ENCODE measurements at regions of chr7 and their contacts with region 1.

Region 1: DNA sequence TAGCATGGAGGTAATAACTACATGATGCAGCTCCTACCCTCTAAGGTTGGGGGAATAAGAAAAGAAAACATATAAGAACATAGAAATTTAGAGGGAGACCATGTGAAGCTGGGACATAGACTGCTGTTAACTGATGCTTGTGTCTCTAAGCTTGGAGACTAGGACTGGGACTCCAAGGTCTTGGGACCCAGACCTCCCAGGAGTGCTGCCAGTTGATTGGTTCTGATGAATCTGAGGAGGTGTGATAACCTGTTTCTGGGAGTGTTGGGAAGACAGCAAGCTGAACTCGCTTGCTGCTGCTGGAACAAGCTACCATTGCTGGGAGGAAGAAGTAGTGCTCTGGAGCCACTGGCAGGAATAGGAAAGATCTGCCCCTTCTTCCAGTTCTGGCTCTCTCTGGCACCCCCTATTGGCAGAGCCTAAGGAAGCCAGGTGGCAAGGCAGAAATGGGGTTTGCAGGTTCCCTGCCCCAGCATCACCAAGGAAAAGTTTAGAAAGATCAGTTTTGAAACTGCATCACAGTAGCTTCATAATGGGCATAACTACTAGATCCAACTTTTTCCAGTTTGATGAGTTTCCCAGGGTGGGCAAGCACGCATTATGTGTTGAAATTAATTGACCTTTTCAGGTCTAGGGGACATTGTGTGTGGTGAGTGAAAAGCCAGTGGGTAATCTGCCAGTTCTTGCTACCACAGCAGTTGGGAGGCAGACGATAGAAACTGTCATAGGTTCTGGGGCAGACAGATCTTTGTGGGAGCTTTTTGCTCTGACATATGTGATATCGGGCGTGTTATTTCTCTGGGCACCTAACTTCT is 140.7 kb downstream of the SND1 start:
- DNase-seq: no peak
- ATAC-seq: peak; percentile 89
- H3K4me3 ChIP-seq: no peak overlapping the region
- H3K27ac ChIP-seq: no peak overlapping the region
- H3K4me1 ChIP-seq: peaks cover 5% of the 10 kb centered on the region; the same call in 1 of the 2 replicates
- H3K27me3 ChIP-seq: no peaks in the 10 kb centered on the region
- CTCF ChIP-seq: peak; percentile 49 to 89 (median 63)
- EP300 ChIP-seq: no peak
- POLR2A ChIP-seq: no peak
- RAD21 ChIP-seq: peak; percentile 38

Region 2: GRCh38 chr7:127536741-127537140 is 256.0 kb before region 1 on chr7:
- CTCF ChIA-PET with region 1: no interaction called
- POLR2A ChIA-PET with region 1: no interaction called
- RAD21 ChIA-PET with region 1: no interaction called
- SMC1A ChIA-PET with region 1: no interaction called
- in situ Hi-C with region 1: no loop called
- intact Hi-C with region 1: no loop called
- DNase-seq: no peak
- ATAC-seq: no peak
- H3K4me3 ChIP-seq: no peak overlapping the region
- H3K27ac ChIP-seq: no peak overlapping the region
- H3K4me1 ChIP-seq: no peaks in the 10 kb centered on the region
- H3K27me3 ChIP-seq: no peaks in the 10 kb centered on the region
- CTCF ChIP-seq: no peak
- EP300 ChIP-seq: no peak
- POLR2A ChIP-seq: no peak
- RAD21 ChIP-seq: no peak

Region 3: DNA sequence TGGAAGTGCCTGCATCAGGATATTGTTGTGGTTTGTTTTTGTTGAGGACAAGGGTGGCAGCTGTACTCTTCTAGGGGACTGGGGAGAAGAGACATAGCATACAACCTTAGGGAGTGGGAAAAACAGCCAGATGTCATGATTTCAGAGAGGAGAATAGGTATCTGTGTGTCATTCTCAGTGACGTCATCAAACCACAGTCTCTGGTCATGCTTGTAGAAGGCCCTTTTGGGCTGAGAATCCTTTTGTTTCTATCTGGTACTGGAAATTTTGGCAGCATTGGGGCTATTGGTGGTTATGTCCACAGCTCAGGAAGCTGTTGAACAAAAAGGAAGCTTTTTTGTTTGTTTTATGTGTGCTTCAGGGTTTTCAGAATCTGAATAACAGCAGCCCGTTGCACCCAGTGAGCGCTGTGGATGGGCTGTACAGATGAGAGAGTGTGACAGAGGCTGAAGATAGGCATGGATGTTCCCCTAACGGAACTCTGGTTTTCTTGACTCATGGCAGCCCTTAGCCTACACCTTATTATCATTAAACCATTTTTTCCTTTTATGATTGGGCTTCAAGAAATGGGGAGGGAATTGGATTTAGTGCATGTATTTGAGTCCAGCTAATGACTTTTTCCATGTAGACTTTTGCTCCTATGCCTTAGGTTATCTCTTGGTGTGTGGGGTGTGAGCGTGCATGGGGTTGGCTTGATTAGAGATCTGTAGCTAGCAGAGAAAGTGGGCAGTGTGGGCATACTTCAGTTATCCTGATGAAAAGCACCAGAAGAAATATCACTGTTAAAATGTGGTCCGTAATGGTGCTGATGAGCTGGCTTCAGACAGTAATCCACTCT is 75.0 kb before region 1 on chr7:
- CTCF ChIA-PET with region 1: interaction called, 13 read pairs
- POLR2A ChIA-PET with region 1: no interaction called
- RAD21 ChIA-PET with region 1: no interaction called
- SMC1A ChIA-PET with region 1: interaction called, 3 read pairs
- in situ Hi-C with region 1: no loop called
- intact Hi-C with region 1: no loop called
- DNase-seq: no peak
- ATAC-seq: peak; percentile 78
- H3K4me3 ChIP-seq: no peak overlapping the region
- H3K27ac ChIP-seq: no peak overlapping the region
- H3K4me1 ChIP-seq: no peaks in the 10 kb centered on the region
- H3K27me3 ChIP-seq: no peaks in the 10 kb centered on the region
- CTCF ChIP-seq: no peak
- EP300 ChIP-seq: no peak
- POLR2A ChIP-seq: no peak
- RAD21 ChIP-seq: no peak

Region 4: DNA sequence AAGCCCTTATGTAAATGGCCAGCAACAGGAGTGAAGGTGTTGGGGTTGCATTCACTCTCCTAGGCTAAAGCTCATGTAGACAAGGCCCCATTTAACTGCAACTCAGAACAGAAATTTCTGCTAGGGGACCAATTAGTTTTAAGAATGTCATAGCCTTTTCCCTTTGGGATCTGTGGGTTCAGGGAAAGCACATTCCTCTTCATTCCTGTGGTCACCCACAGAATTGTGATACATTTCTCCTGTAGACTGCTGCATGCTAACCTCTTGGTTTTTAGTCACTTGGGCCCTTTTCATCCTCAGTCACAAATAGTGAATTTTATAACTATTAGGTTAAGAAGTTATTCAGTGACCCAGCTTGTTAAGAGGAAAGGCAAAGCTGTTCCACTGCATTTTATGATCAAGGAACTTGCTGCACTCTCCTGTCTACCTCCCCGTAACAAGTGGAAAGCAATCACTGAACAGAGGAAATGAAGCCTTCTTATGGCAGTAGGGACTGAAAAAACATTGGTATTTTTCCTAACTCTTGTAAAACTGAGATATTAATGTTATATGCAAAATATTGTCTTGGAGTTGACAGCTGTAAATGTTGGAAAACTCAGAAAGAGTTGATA is 15.9 kb before region 1 on chr7:
- CTCF ChIA-PET with region 1: interaction called, 14 read pairs
- POLR2A ChIA-PET with region 1: no interaction called
- RAD21 ChIA-PET with region 1: interaction called, 9 read pairs
- SMC1A ChIA-PET with region 1: interaction called, 16 read pairs
- in situ Hi-C with region 1: no loop called
- intact Hi-C with region 1: no loop called
- DNase-seq: no peak
- ATAC-seq: no peak
- H3K4me3 ChIP-seq: no peak overlapping the region
- H3K27ac ChIP-seq: no peak overlapping the region
- H3K4me1 ChIP-seq: no peaks in the 10 kb centered on the region
- H3K27me3 ChIP-seq: no peaks in the 10 kb centered on the region
- CTCF ChIP-seq: no peak
- EP300 ChIP-seq: no peak
- POLR2A ChIP-seq: no peak
- RAD21 ChIP-seq: no peak

Region 5: GRCh38 chr7:127803626-127804025 is 10.9 kb after region 1 on chr7:
- CTCF ChIA-PET with region 1: interaction called, 33 read pairs
- POLR2A ChIA-PET with region 1: no interaction called
- RAD21 ChIA-PET with region 1: interaction called, 3 read pairs
- SMC1A ChIA-PET with region 1: interaction called, 8 read pairs
- in situ Hi-C with region 1: no loop called
- intact Hi-C with region 1: no loop called
- DNase-seq: no peak
- ATAC-seq: no peak
- H3K4me3 ChIP-seq: no peak overlapping the region
- H3K27ac ChIP-seq: no peak overlapping the region
- H3K4me1 ChIP-seq: no peaks in the 10 kb centered on the region
- H3K27me3 ChIP-seq: no peaks in the 10 kb centered on the region
- CTCF ChIP-seq: no peak
- EP300 ChIP-seq: no peak
- POLR2A ChIP-seq: no peak
- RAD21 ChIP-seq: no peak

Region 6: GRCh38 chr7:127809261-127809702 is 16.5 kb after region 1 on chr7:
- CTCF ChIA-PET with region 1: interaction called, 33 read pairs
- POLR2A ChIA-PET with region 1: no interaction called
- RAD21 ChIA-PET with region 1: interaction called, 3 read pairs
- SMC1A ChIA-PET with region 1: interaction called, 11 read pairs
- in situ Hi-C with region 1: no loop called
- intact Hi-C with region 1: no loop called
- DNase-seq: no peak
- ATAC-seq: no peak
- H3K4me3 ChIP-seq: no peak overlapping the region
- H3K27ac ChIP-seq: no peak overlapping the region
- H3K4me1 ChIP-seq: no peaks in the 10 kb centered on the region
- H3K27me3 ChIP-seq: no peaks in the 10 kb centered on the region
- CTCF ChIP-seq: no peak
- EP300 ChIP-seq: no peak
- POLR2A ChIP-seq: 0 out of 2 replicates have a peak, but pooled peaks have one; percentile 29
- RAD21 ChIP-seq: no peak

Measured in GM12878 (cell line).